Adrenal gland (tissue), 19 donors: ENCODE measurements at regions of chr2 and their contacts with region 1.

Region 1: DNA sequence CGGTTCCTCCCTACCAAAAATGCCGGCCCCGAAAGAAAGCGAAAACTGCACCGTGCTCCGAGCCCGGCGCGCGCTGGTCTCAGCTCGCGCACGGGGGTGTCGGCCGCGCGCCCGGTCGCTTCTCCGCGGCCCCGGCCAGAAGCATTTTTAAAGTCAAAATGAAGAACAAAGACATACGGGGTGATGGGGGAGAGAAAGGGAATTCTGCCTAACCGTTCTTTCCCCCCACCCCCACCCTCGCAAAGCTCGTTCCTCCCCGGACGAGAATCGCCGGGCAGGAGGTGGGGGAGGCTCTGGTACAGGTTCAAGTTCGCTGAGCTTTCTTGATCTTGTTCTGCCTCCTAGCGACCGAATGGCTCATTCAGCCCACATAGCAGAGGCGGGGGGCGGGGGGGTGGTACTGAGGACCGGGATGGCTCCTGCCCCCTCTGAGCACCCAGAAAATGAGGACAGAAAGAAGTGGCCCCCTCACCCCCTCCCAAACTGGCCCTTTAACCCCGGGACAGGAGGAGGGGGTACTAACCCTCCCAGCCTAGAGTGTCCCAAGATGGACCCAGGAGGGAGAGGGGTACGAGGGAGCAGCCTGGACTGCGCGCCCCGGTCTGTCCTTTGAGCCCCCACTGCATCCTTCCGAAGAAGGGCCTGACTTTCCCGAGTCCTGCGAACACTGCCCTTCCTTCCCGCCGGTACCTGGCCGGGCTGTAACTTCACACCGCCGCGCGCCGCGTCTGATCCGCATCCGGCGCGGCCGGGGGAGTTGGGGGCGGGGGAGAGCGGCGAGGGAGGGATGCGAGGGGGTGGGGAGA is 3.1 kb downstream of the BCL11A start:
- DNase-seq: peak; percentile 83 to 91 (median 87)
- H3K4me3 ChIP-seq: peak overlapping the region; percentile 21 to 67 (median 60)
- H3K27ac ChIP-seq: peak overlapping the region in 4 of 5 donors; percentile 77 to 87 (median 84)
- H3K4me1 ChIP-seq: peaks cover 15 to 58% of the 10 kb centered on the region in 2 donors
- H3K27me3 ChIP-seq: peaks cover 15% of the 10 kb centered on the region
- CTCF ChIP-seq: peak; percentile 40 to 70 (median 57)
- POLR2A ChIP-seq: peak in 1 of 2 donors; percentile 42

Region 2: GRCh38 chr2:59301466-59302402 is 1248.6 kb before region 1 on chr2:
- intact Hi-C with region 1: loop called in 1 of 2 experiments (anchors 5 kb)
- DNase-seq: peak; percentile 42 to 74 (median 55)
- H3K4me3 ChIP-seq: no peak overlapping the region
- H3K27ac ChIP-seq: no peak overlapping the region
- H3K4me1 ChIP-seq: no peaks in the 10 kb centered on the region
- H3K27me3 ChIP-seq: no peaks in the 10 kb centered on the region
- CTCF ChIP-seq: peak; percentile 44 to 73 (median 66)
- POLR2A ChIP-seq: no peak

Region 3: GRCh38 chr2:60480089-60480773 is 70.2 kb before region 1 on chr2:
- intact Hi-C with region 1: no loop called
- DNase-seq: no peak
- H3K4me3 ChIP-seq: no peak overlapping the region
- H3K27ac ChIP-seq: no peak overlapping the region
- H3K4me1 ChIP-seq: peaks cover 0 to 17% of the 10 kb centered on the region in 2 donors
- H3K27me3 ChIP-seq: no peaks in the 10 kb centered on the region
- CTCF ChIP-seq: no peak
- POLR2A ChIP-seq: no peak

Region 4: GRCh38 chr2:61210331-61210981 is 660.1 kb after region 1 on chr2:
- intact Hi-C with region 1: no loop called
- DNase-seq: no peak
- H3K4me3 ChIP-seq: no peak overlapping the region
- H3K27ac ChIP-seq: peak overlapping the region in 2 of 5 donors; percentile 35 to 39
- H3K4me1 ChIP-seq: peaks cover 0 to 7% of the 10 kb centered on the region in 2 donors
- H3K27me3 ChIP-seq: no peaks in the 10 kb centered on the region
- CTCF ChIP-seq: no peak
- POLR2A ChIP-seq: no peak